AG04449 (cell line): ENCODE measurements at regions of chr15 and their contacts with region 1.

Region 1: GRCh38 chr15:84575493-84575892 is 25.3 kb upstream of the ZSCAN2 start:
- DNase-seq: no peak
- H3K4me3 ChIP-seq: no peak overlapping the region
- CTCF ChIP-seq: no peak

Region 2: GRCh38 chr15:84588053-84588874 is 12.8 kb after region 1 on chr15:
- CTCF ChIA-PET with region 1: interaction called, 32 read pairs
- POLR2A ChIA-PET with region 1: no interaction called
- DNase-seq: no peak
- H3K4me3 ChIP-seq: peak overlapping the region; percentile 44
- CTCF ChIP-seq: peak; percentile 82